Activated CD4-positive, alpha-beta T cell treated with anti-CD3 and anti-CD28 coated beads for 36 hours (primary cell): ENCODE measurements at regions of chr2 and their contacts with region 1.

Region 1: DNA sequence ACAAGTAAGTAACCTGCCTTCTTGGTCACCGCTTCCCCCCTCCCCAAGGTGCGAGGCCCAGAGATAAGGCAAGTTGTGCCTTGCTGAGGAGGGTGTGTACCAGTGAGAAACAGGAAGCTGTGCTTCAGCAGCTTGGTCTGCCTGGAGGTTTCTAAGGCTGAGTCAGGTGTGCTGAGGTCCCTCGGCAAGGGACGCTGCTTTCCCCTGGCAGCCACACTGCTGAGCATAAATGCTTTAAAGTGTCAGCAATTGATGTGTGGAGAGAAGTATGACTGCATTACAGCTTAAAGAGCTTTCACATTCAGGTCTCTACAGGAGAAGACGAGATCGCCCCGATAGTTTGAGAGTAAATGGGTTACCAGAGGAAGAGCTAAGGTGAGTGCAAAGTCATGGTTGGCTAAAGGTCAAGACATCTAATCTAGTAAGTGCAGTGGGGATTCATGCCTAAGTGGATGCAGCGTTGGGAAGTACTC is 86.9 kb downstream of the LIMS1 start:
- DNase-seq: peak; percentile 87
- ATAC-seq: peak; percentile 95
- H3K4me3 Mint-ChIP-seq: peak overlapping the region; percentile 76
- H3K27ac Mint-ChIP-seq: peak overlapping the region; percentile 91
- H3K4me1 Mint-ChIP-seq: peaks cover 85% of the 10 kb centered on the region
- H3K27me3 Mint-ChIP-seq: no peaks in the 10 kb centered on the region

Region 2: DNA sequence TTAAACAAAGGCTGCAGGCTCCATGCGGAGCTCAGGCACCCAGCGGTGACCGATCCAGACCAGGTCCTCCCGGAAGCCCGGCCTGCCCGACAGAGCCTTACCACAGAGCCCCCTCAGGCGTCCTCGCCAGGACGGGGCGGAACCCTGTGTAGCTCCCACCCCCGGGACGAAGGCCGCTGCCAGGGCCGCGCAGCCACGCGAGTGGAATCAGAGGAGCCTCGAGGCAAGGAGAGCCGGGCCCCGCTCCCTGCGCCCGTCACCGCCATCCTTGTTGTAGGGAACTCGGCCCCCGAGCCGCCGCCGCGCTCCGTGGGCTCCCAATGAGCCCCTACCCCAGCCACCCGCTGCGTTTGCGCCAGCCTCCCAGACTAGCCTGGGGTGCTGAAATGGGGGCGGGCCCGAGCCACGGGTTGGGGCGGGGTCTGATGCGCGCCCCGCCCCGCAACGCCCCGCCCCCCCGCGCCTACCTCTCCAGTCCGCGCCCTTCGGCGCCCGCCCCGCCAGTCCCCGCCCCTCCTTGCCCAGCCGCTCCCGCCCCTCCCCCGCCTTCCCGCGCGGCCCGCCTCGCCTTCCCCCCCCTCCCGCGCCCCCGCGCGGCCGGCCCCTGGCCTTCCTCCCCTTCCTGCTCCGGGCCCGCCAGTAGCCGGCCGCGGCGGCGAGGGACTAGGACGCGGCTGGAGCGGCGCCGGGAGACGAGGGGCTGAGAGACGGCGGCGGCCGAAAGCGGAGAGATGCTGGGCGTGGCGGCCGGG is 87.1 kb before region 1 on chr2 and contains the start of gene LIMS1:
- CTCF ChIA-PET with region 1: no interaction called
- POLR2A ChIA-PET with region 1: no interaction called
- intact Hi-C with region 1: loop called in 1 of 2 experiments (anchors 5 kb)
- DNase-seq: peak; percentile 95
- ATAC-seq: peak; percentile 89
- H3K4me3 Mint-ChIP-seq: peak within 1 kb of the TSS; percentile 89
- H3K27ac Mint-ChIP-seq: peak within 1 kb of the TSS; percentile 89
- H3K4me1 Mint-ChIP-seq: peaks cover 44% of the 10 kb centered on the region
- H3K27me3 Mint-ChIP-seq: no peaks in the 10 kb centered on the region
- total RNA-seq, gene LIMS1: 47.5 to 70.3 TPM

Region 3: GRCh38 chr2:108637304-108637669 is 16.2 kb after region 1 on chr2:
- CTCF ChIA-PET with region 1: interaction called, 119 read pairs
- POLR2A ChIA-PET with region 1: interaction called, 4 read pairs
- intact Hi-C with region 1: no loop called
- DNase-seq: no peak
- ATAC-seq: no peak
- H3K4me3 Mint-ChIP-seq: no peak overlapping the region
- H3K27ac Mint-ChIP-seq: peak overlapping the region; percentile 60
- H3K4me1 Mint-ChIP-seq: peaks cover 73% of the 10 kb centered on the region
- H3K27me3 Mint-ChIP-seq: no peaks in the 10 kb centered on the region

Region 4: DNA sequence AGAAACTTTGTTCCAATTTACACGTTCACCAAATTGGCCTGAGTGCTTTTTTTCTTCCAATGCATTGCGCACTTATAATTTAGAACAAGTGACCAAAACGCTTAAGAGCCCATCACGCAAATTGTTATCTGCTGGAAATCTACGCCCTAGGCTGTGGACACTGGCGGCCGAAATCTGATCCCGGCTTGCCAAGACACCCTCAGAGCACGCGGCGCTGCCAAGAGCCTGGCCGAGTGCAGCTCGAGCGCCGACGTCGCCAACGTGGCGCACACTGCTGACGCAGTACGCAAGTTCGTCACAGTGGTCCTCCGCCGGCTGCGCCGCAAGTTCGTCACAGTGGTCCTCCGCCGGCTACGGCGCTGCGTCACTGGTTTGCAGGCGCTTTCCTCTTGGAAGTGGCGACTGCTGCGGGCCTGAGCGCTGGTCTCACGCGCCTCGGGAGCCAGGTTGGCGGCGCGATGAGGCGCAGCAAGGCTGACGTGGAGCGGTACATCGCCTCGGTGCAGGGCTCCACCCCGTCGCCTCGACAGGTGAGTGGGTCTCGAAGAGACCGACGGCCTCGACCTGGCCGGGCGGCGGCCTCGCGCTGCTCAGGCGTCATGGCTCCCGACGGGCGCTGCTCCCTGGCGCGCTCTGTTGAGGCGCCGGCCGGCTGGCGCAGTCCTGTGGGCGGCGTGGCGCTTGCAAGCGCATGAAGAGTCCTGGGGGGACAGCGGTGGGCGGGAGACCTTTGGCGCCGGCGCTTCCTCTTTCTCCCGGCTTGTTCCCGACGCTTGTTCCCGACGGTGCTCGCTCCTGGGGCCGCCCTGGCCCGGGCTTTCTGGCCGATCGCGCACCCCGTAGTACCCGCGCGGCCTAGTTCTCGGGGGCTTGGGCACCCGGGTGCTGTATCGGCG is 98.3 kb after region 1 on chr2 and contains the start of gene RANBP2:
- CTCF ChIA-PET with region 1: no interaction called
- POLR2A ChIA-PET with region 1: no interaction called
- intact Hi-C with region 1: loop called in 1 of 2 experiments (anchors 1 kb)
- DNase-seq: peak; percentile 97
- ATAC-seq: peak; percentile 97
- H3K4me3 Mint-ChIP-seq: peak within 1 kb of the TSS; percentile 93
- H3K27ac Mint-ChIP-seq: peak within 1 kb of the TSS; percentile 98
- H3K4me1 Mint-ChIP-seq: peaks cover 15% of the 10 kb centered on the region
- H3K27me3 Mint-ChIP-seq: no peaks in the 10 kb centered on the region
- total RNA-seq, gene RANBP2: 68.1 to 77.1 TPM

Region 5: DNA sequence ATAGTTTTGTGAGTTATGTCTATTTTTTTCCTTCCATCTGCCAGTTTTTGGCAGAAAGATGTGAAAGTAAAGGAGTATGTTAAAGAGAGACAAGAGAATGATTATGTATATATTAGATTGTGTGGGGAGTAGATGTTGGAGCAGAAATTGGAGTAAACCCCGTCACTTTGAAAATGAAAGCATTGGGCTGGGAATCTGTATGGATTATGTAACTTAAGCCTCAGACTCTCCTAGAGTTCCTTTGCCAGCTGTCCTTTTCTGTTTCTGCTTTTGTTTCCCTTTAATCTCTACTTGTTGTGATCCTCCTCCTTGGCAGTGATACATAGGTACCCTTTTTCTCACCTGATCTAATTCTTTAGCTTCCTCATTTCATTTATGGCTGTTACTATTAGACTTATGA is 184.7 kb after region 1 on chr2:
- CTCF ChIA-PET with region 1: no interaction called
- POLR2A ChIA-PET with region 1: no interaction called
- intact Hi-C with region 1: no loop called
- DNase-seq: no peak
- ATAC-seq: no peak
- H3K4me3 Mint-ChIP-seq: no peak overlapping the region
- H3K27ac Mint-ChIP-seq: no peak overlapping the region
- H3K4me1 Mint-ChIP-seq: no peaks in the 10 kb centered on the region
- H3K27me3 Mint-ChIP-seq: no peaks in the 10 kb centered on the region